ENCODE measurements at regions of chr6 and their contacts with region 1.

Region 1: GRCh38 chr6:82178077-82178758 is 69.3 kb downstream of the IBTK start:
- DNase-seq: no peak
- H3K4me3 ChIP-seq: no peak overlapping the region
- H3K27me3 ChIP-seq: no peaks in the 10 kb centered on the region
- CTCF ChIP-seq: peak; percentile 57

Region 2: GRCh38 chr6:82144007-82144851 is 34.0 kb before region 1 on chr6:
- CTCF ChIA-PET with region 1: interaction called, 10 read pairs
- POLR2A ChIA-PET with region 1: no interaction called
- DNase-seq: peak; percentile 92
- H3K4me3 ChIP-seq: no peak overlapping the region
- H3K27me3 ChIP-seq: no peaks in the 10 kb centered on the region
- CTCF ChIP-seq: no peak

Measured in BJ (cell line).